A673 (cell line): ENCODE measurements at regions of chr2 and their contacts with region 1.

Region 1: DNA sequence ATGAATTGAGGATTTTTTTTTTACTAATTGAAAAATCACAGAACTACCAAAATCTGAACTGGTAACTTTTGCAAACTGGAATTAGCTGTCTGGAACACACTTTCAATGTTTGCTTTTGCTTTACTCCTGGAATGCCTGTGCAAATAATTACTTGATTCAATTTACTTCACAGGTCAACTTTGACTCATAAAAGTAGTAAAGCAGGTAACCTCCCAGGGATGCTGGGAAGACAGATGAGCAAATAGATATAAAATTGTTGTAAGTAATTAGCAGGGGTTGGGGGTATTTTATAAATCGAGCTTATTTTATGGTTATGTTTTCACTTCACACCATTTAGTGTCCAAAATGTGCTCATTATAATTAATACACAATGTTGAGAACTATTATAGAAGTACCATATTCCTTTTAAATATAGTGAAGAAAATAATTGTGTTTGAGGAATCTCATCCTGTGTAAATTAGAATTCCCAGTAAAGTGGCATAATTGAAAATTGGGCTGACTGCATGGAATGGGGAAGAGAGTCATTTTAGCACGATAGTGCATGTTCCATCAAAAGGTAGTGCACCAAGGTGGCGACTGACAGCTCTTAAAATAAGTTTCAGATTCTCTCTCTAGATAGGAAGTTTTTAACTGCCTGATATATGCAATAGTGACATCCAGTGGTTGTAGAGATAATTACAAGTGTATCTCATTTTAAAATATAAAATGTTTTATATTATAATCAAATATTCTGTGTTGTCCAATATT is 398.1 kb upstream of the HNRNPA3 start:
- DNase-seq: peak; percentile 73
- H3K4me3 ChIP-seq: no peak overlapping the region
- H3K27ac ChIP-seq: peak overlapping the region; percentile 74
- H3K4me1 ChIP-seq: peaks cover 80% of the 10 kb centered on the region
- H3K27me3 ChIP-seq: no peaks in the 10 kb centered on the region
- CTCF ChIP-seq: peak; percentile 68

Region 2: GRCh38 chr2:176140513-176141317 is 673.8 kb before region 1 on chr2:
- CTCF ChIA-PET with region 1: no interaction called
- POLR2A ChIA-PET with region 1: no interaction called
- intact Hi-C with region 1: loop called (anchors 5 kb)
- DNase-seq: peak; percentile 94
- H3K4me3 ChIP-seq: peak overlapping the region; percentile 85
- H3K27ac ChIP-seq: peak overlapping the region; percentile 61
- H3K4me1 ChIP-seq: peaks cover 34% of the 10 kb centered on the region
- H3K27me3 ChIP-seq: no peaks in the 10 kb centered on the region
- CTCF ChIP-seq: peak; percentile 94

Region 3: DNA sequence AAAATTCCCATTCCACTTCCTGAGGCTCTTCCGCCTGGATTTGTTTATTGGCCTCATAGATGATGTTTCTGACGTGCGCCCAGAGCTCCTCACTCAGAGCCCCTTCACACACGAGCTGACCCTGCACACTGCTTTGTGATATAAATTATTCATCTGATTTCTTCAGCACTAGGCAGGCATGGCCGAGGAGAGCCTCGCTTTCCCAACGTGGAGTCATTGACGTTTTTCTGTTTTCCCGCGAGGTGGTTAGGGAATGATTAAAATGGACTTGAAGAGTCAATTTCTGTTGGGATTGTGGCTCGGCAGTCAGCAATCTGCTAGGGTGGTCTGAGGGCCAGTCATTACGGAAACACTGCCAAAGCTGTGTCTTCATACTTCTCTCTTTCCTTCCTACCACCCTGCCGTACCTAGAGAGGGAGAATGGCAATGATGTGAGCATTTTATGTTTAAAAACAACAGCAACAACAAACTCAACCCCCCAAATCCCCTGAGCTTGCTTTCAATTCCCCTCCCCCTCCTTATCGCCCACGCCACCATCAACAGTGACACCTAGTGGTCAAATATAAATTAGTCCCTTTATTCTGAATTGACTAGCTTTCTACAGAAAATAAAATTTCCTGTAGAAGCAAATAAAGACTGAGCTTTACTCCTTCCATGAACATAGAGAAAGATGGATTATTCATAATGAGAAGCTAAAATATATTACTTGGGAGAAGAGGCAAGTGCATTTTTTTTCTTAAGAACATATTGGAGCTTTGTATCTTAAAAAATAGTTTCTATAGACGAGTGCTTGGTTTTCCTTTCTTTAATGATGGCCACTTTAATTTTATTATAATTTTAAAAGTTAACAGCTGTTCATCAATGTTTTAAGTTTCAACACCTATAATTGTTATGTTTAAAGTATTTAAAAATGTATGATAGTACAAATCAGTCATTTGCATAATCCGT is 260.1 kb before region 1 on chr2:
- CTCF ChIA-PET with region 1: interaction called, 3 read pairs
- POLR2A ChIA-PET with region 1: no interaction called
- intact Hi-C with region 1: loop called (anchors 10 kb)
- DNase-seq: peak; percentile 86
- H3K4me3 ChIP-seq: peak overlapping the region; percentile 53
- H3K27ac ChIP-seq: peak overlapping the region; percentile 80
- H3K4me1 ChIP-seq: peaks cover 19% of the 10 kb centered on the region
- H3K27me3 ChIP-seq: no peaks in the 10 kb centered on the region
- CTCF ChIP-seq: peak; percentile 82

Region 4: DNA sequence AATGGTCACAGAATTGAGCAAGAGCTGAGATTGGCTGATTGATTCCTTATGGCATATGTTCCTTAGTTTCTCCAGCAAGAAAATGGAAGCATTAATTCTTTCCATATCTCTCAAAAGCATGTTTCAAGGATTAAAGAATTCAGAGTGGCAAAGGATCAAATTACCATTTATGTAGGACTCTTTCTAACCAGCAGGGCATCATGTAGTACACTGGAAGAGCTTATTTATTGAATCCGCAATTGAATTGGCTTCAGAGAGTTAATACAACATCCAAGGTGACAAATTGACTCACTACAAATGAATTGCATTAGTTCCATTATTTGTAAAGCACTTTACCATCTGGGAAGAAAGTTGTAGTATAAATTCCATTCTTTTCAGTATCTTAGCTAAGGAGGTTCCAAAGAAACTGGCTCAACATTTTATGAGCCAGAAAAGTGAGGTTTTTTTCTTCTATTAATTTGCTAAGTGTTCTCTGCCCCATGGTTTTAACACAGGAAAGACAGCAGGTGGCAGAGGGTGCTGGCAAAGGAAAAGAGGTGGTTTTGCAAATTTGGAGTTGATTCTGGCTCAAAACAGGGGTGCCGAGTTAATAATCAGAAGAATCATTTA is 135.3 kb before region 1 on chr2:
- CTCF ChIA-PET with region 1: interaction called, 7 read pairs
- POLR2A ChIA-PET with region 1: no interaction called
- intact Hi-C with region 1: loop called (anchors 5 kb)
- DNase-seq: peak; percentile 88
- H3K4me3 ChIP-seq: no peak overlapping the region
- H3K27ac ChIP-seq: peak overlapping the region; percentile 91
- H3K4me1 ChIP-seq: peaks cover 97% of the 10 kb centered on the region
- H3K27me3 ChIP-seq: no peaks in the 10 kb centered on the region
- CTCF ChIP-seq: peak; percentile 45

Region 5: GRCh38 chr2:176692533-176692932 is 121.9 kb before region 1 on chr2:
- CTCF ChIA-PET with region 1: interaction called, 3 read pairs
- POLR2A ChIA-PET with region 1: no interaction called
- intact Hi-C with region 1: loop called (anchors 5 kb)
- DNase-seq: no peak
- H3K4me3 ChIP-seq: no peak overlapping the region
- H3K27ac ChIP-seq: peak overlapping the region; percentile 41
- H3K4me1 ChIP-seq: peaks cover 81% of the 10 kb centered on the region
- H3K27me3 ChIP-seq: no peaks in the 10 kb centered on the region
- CTCF ChIP-seq: no peak

Region 6: GRCh38 chr2:176745543-176746200 is 68.8 kb before region 1 on chr2:
- CTCF ChIA-PET with region 1: no interaction called
- POLR2A ChIA-PET with region 1: no interaction called
- intact Hi-C with region 1: loop called (anchors 5 kb)
- DNase-seq: peak; percentile 57
- H3K4me3 ChIP-seq: no peak overlapping the region
- H3K27ac ChIP-seq: peak overlapping the region; percentile 74
- H3K4me1 ChIP-seq: peaks cover 79% of the 10 kb centered on the region
- H3K27me3 ChIP-seq: no peaks in the 10 kb centered on the region
- CTCF ChIP-seq: no peak

Region 7: DNA sequence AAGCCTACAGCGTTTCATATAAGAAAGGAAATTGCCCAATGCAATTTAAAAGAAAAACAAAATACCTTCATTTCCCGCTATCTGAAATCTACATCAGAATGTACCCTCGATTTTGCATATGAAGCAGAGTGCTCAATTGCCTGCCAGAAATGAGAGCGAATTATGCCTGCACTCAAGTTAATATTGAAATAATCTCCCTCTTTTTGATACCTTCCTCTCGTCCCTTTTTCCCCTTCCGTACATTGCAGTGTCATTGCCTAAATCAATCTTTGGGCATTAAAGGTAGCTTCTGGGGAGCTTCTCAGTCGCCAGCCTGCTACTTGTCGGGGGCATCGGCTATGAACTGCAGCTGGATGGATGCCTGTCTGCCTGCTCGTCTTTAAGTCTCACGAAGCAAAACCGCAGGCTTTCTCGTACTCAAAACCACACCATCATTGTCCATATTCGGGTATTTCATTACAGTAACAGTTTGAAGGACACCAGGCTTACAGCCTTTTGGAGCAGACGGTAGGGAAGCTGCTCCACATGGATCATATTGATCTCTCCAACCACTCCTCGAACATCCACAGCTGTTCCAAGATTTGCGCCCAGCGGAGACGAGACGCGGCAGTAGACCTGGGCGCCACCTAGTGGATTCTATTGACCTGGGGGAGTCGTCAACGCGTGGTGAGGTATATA is 334.1 kb after region 1 on chr2:
- CTCF ChIA-PET with region 1: interaction called, 9 read pairs
- POLR2A ChIA-PET with region 1: no interaction called
- intact Hi-C with region 1: loop called (anchors 1 kb)
- DNase-seq: peak; percentile 96
- H3K4me3 ChIP-seq: peak overlapping the region; percentile 48
- H3K27ac ChIP-seq: peak overlapping the region; percentile 57
- H3K4me1 ChIP-seq: peaks cover 40% of the 10 kb centered on the region
- H3K27me3 ChIP-seq: no peaks in the 10 kb centered on the region
- CTCF ChIP-seq: peak; percentile 95